MCF 10A (cell line): ENCODE measurements at regions of chr6 and their contacts with region 1.

Region 1: DNA sequence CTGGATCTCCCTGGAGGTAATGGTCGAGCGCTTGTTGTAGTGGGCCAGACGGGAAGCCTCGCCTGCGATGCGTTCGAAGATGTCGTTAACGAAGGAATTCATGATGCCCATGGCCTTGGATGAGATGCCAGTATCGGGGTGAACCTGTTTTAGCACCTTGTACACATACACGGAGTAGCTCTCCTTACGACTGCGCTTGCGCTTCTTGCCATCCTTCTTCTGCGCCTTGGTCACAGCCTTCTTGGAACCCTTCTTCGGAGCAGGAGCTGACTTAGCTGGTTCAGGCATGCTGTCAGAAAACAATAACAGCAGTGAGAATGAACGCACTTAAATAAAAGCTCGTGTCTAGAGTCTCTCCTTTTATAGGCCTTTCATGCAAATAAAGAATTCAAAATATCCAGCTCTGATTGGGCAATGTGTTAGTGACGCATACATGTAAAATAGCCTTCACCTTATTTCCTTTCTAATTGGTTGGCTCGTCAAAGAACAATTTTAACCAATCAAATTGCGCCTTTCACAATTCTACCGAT is 129.2 kb downstream of the HFE start:
- DNase-seq: peak; percentile 98
- H3K4me3 Mint-ChIP-seq: no peak overlapping the region
- H3K27ac Mint-ChIP-seq: no peak overlapping the region
- H3K4me1 Mint-ChIP-seq: no peaks in the 10 kb centered on the region
- H3K27me3 Mint-ChIP-seq: no peaks in the 10 kb centered on the region
- CTCF ChIP-seq: no peak

Region 2: DNA sequence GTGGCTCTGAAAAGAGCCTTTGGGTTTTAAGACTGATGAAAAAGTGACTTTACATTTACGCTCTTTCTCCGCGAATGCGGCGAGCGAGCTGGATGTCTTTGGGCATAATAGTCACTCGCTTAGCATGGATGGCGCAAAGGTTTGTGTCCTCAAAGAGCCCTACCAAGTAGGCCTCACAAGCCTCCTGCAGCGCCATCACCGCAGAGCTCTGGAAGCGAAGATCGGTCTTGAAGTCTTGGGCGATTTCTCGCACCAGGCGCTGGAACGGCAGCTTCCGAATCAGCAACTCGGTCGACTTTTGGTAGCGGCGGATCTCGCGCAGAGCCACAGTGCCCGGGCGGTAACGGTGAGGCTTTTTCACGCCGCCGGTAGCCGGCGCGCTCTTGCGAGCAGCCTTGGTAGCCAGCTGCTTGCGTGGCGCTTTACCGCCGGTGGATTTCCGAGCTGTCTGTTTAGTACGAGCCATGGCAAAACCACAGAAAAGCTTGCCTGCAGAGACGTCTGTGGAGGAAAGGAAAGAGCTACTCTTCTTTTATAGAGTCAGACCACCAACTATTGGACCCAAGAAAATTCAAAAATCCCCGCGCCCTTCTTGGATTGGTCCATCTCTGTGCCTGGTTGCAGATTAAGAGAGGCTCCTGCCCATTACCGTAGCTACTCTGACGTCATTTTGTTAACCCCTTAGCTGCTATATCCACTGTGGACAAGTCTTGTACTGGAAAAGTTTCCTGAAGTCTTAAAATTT is 184.7 kb before region 1 on chr6:
- CTCF ChIA-PET with region 1: no interaction called
- POLR2A ChIA-PET with region 1: interaction called, 40 read pairs
- intact Hi-C with region 1: no loop called
- DNase-seq: peak; percentile 99
- H3K4me3 Mint-ChIP-seq: peak overlapping the region; percentile 81
- H3K27ac Mint-ChIP-seq: peak overlapping the region; percentile 97
- H3K4me1 Mint-ChIP-seq: peaks cover 25% of the 10 kb centered on the region
- H3K27me3 Mint-ChIP-seq: no peaks in the 10 kb centered on the region
- CTCF ChIP-seq: peak; percentile 12

Region 3: GRCh38 chr6:26175428-26176181 is 40.8 kb before region 1 on chr6:
- CTCF ChIA-PET with region 1: no interaction called
- POLR2A ChIA-PET with region 1: interaction called, 71 read pairs
- intact Hi-C with region 1: loop called (anchors 1 kb)
- DNase-seq: peak; percentile 82
- H3K4me3 Mint-ChIP-seq: peak overlapping the region; percentile 23
- H3K27ac Mint-ChIP-seq: peak overlapping the region; percentile 70
- H3K4me1 Mint-ChIP-seq: peaks cover 28% of the 10 kb centered on the region
- H3K27me3 Mint-ChIP-seq: no peaks in the 10 kb centered on the region
- CTCF ChIP-seq: peak; percentile 70

Region 4: GRCh38 chr6:26243132-26243531 is 26.7 kb after region 1 on chr6:
- CTCF ChIA-PET with region 1: interaction called, 4 read pairs
- POLR2A ChIA-PET with region 1: interaction called, 200 read pairs
- intact Hi-C with region 1: no loop called
- DNase-seq: peak; percentile 14
- H3K4me3 Mint-ChIP-seq: no peak overlapping the region
- H3K27ac Mint-ChIP-seq: no peak overlapping the region
- H3K4me1 Mint-ChIP-seq: no peaks in the 10 kb centered on the region
- H3K27me3 Mint-ChIP-seq: no peaks in the 10 kb centered on the region
- CTCF ChIP-seq: no peak

Region 5: GRCh38 chr6:26312501-26313390 is 96.3 kb after region 1 on chr6:
- CTCF ChIA-PET with region 1: interaction called, 3 read pairs
- POLR2A ChIA-PET with region 1: interaction called, 14 read pairs
- intact Hi-C with region 1: loop called (anchors 5 kb)
- DNase-seq: peak; percentile 82
- H3K4me3 Mint-ChIP-seq: peak overlapping the region; percentile 79
- H3K27ac Mint-ChIP-seq: peak overlapping the region; percentile 74
- H3K4me1 Mint-ChIP-seq: peaks cover 26% of the 10 kb centered on the region
- H3K27me3 Mint-ChIP-seq: no peaks in the 10 kb centered on the region
- CTCF ChIP-seq: no peak

Region 6: GRCh38 chr6:27809939-27810767 is 1593.7 kb after region 1 on chr6:
- CTCF ChIA-PET with region 1: no interaction called
- POLR2A ChIA-PET with region 1: interaction called, 79 read pairs
- intact Hi-C with region 1: no loop called
- DNase-seq: peak; percentile 96
- H3K4me3 Mint-ChIP-seq: peak overlapping the region; percentile 86
- H3K27ac Mint-ChIP-seq: peak overlapping the region; percentile 94
- H3K4me1 Mint-ChIP-seq: peaks cover 20% of the 10 kb centered on the region
- H3K27me3 Mint-ChIP-seq: no peaks in the 10 kb centered on the region
- CTCF ChIP-seq: no peak